Dorsolateral prefrontal cortex (tissue), 120 donors: ENCODE measurements at regions of chr9 and their contacts with region 1.

Region 1: GRCh38 chr9:96217754-96218693 is 84.0 kb downstream of the HSD17B3 start:
- DNase-seq: peak; percentile 49 to 84 (median 66)
- H3K4me3 ChIP-seq: peak overlapping the region; percentile 19 to 64 (median 48)
- H3K27ac ChIP-seq: peak overlapping the region in 57 of 59 donors; percentile 11 to 90 (median 77)
- H3K27me3 ChIP-seq: no peaks in the 10 kb centered on the region
- CTCF ChIP-seq: peak; percentile 75 to 100 (median 99)

Region 2: DNA sequence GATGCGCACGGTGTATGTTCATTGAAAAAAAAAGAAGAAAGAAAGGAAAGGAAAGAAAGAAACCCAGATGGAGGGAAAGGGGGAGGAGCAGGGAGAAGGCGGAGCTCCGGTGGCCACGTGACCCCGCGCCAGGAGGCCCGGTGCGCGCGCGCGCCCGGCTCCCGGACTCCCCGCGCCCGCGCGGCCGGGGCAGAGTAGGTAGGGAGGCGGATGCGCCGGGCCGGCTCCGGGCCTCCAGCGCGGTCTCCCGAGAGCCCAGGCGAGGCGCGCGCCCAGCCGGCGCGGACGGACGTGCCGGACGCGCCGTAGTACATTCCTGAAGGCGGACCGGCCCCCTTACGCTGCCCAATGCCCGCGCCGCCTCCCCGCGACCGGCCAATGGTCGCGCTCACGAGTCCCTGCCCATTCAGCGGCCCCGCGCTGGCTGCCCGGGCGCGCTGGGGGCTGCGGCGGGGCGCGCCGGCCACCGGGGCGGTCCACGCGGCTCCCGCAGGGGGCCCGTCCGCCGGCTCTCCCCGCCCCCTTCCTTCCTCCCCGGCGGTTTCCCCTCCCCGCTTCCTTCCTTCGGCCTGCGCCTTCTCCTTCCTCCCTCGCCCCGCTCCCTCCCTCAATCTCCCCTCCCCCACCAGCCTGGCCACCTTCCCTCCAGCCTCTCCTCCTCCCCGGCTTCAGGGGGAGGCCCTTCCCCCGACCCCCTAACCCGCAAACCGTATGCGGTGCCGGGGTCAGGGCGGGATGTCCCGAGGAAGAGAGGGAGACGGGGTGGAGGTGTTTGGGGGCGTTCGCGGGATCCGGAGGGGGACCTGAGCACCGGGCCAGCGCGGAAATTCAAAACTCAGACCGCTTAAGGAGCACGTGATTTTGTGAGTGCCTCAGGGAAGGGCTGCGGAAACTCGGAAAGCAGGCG is 707.1 kb before region 1 on chr9:
- intact Hi-C with region 1: loop called (anchors 2 to 5 kb)
- DNase-seq: peak; percentile 77 to 92 (median 90)
- H3K4me3 ChIP-seq: peak overlapping the region; percentile 62 to 92 (median 83)
- H3K27ac ChIP-seq: peak overlapping the region; percentile 66 to 98 (median 95)
- H3K27me3 ChIP-seq: no peaks in the 10 kb centered on the region
- CTCF ChIP-seq: peak in 12 of 56 donors; percentile 3 to 24 (median 14)

Region 3: GRCh38 chr9:95875305-95876137 is 342.5 kb before region 1 on chr9 and contains the start of gene ERCC6L2:
- intact Hi-C with region 1: loop called (anchors 1 to 2 kb)
- DNase-seq: peak; percentile 76 to 96 (median 92)
- H3K4me3 ChIP-seq: no peak within 1 kb of the TSS
- H3K27ac ChIP-seq: peak within 1 kb of the TSS in 43 of 59 donors; percentile 91 to 100 (median 100)
- H3K27me3 ChIP-seq: no peaks in the 10 kb centered on the region
- CTCF ChIP-seq: peak in 35 of 56 donors; percentile 5 to 48 (median 24)
- total RNA-seq, gene ERCC6L2: 61.3 to 111 (median 82.9) TPM

Region 4: DNA sequence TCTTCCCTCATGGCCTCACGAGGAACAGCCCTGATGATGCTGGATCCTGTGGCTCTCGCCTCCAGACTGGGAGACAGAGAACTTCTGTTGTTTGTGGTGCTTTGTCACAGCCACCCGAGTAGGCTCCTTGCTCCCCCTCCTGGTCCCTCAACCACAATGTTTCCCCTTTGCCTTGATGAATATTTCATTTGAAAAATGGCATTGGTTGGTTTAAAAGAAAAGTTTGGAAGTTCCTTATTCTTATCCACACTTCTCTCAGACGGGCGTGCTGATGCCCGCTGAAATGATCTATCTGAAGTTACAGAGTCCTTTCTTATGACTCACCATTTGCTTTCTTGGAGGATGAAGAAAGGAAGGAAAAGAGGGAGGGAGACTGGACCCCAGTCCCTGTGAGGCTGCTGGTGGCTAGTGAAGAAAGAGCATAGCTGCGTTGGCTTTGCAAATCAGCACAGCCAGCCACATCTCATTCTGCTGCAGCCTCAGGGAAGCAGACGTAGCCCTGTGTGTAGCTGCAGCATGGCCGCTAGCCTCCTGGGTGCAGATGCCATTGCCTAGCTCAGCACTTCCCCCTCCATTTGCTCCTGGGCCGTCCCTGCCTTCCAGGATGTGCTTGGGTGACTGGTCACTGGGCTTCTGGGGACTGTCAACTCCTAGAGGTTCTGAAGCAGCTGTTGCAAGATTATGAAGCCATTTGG is 156.6 kb before region 1 on chr9:
- intact Hi-C with region 1: loop called in 1 of 2 experiments (anchors 2 kb)
- DNase-seq: peak in 7 of 10 donors; percentile 27 to 66 (median 50)
- H3K4me3 ChIP-seq: peak overlapping the region in 1 of 59 donors; percentile 0
- H3K27ac ChIP-seq: peak overlapping the region in 10 of 59 donors; percentile 6 to 48 (median 42)
- H3K27me3 ChIP-seq: no peaks in the 10 kb centered on the region
- CTCF ChIP-seq: peak in 54 of 56 donors; percentile 35 to 78 (median 56)

Region 5: DNA sequence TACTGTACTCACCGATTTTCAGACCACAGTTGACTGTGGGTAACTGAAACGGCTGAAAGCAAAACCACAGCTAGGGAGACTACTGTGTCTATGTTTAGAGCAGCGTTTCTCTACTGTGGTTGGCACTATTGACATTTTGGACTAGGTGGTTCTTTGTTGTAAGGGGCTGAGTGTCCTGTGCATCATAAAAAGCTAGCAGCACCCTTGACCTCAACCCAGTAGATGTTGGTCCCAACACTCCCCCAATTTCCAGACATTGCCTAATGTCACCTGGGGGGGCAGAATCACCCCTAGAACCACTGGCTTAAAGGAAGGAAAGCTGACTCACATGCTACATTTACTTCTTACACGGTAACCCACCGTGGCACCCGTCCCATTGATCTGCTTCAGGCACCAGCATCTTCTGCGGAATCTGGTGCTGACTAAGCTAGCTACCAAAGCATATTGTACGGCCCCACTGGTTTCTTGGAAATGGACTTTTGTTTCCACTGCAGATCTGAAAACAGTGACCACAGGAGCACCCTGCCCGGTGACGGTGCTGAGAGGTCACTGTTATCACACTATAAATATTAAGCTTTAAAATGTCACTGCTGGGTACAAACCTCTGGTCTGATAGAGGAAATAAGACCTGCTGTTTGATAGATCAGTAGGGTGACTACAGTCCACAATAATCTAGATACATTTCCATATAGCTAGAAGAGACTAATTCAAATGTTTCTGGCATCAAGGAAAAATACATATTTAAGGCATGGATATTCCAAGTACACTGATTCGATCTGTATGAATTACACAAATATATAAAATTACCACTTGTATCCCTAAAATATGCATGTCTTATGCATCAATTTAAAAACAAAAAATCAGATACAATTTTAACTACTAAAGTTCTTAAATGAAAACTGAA is 67.4 kb before region 1 on chr9:
- intact Hi-C with region 1: no loop called
- DNase-seq: no peak
- H3K4me3 ChIP-seq: no peak overlapping the region
- H3K27ac ChIP-seq: peak overlapping the region in 7 of 59 donors; percentile 40 to 77 (median 72)
- H3K27me3 ChIP-seq: no peaks in the 10 kb centered on the region
- CTCF ChIP-seq: no peak

Region 6: GRCh38 chr9:96177005-96177718 is 40.9 kb before region 1 on chr9:
- intact Hi-C with region 1: loop called in 1 of 2 experiments (anchors 5 kb)
- DNase-seq: peak in 9 of 10 donors; percentile 49 to 74 (median 63)
- H3K4me3 ChIP-seq: peak overlapping the region in 4 of 59 donors; percentile 5 to 18 (median 8)
- H3K27ac ChIP-seq: peak overlapping the region in 11 of 59 donors; percentile 4 to 46 (median 27)
- H3K27me3 ChIP-seq: no peaks in the 10 kb centered on the region
- CTCF ChIP-seq: peak in 19 of 56 donors; percentile 4 to 38 (median 23)

Region 7: DNA sequence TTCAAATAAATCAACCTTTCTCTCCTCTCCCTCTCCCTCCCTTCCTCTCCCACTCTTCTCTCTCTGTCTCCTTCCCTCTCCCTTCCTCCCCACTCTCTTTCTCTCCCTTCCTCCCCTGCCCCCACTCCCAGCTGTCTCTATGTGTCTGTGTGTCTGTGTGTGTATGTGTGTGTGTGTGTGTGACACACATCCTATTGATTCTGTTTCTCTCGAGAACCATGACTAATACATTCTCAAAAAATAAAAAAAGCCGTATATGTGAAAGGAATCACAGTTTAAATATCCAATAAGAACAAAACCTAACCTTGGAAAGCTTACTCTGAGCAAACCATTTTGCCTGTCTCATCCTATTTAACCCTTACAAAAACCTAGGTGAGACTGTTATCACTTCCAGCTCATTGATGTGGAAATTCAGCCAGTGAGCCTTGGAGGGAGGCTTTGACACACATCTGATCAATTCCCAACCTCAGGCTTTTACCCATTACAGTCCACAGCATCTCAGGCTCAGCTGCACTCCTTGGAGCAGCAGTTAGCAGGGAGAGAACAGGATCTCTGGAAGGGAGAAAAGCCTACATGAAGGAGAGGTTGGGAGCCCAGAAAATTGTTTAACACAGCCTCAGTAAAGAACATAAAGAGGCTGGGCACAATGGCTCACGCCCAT is 75.6 kb after region 1 on chr9:
- intact Hi-C with region 1: no loop called
- DNase-seq: no peak
- H3K4me3 ChIP-seq: no peak overlapping the region
- H3K27ac ChIP-seq: peak overlapping the region in 8 of 59 donors; percentile 2 to 70 (median 44)
- H3K27me3 ChIP-seq: no peaks in the 10 kb centered on the region
- CTCF ChIP-seq: no peak